Activated B cell treated with CpG ODN at 0.5 μM for 24 hours (primary cell): ENCODE measurements at regions of chr1 and their contacts with region 1.

Region 1: DNA sequence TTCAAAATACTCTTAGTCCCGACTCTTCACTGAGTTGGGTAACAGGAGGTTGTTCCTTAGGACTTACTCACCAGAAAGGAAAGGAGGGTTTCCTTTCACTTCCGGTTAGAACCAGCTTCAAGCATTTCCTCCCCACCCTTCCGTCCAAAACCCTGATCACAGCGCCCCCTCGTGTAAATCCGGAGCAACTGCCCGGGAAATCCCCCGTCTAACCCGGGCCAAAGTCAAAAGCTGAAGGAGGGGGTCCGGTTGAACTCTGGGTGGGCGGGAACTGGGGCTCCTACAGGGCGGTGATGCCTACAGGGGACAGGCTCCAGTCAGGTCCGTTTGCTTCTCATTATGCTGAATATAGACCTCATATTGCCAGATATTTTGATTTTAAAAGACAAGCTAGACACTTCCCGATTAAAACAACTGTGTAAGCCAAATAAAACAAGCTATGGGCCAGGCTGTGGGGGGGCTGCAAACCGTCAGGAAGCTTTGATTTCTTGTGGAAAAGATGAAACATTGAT is 15.0 kb upstream of the MTARC2 start:
- DNase-seq: peak; percentile 67
- ATAC-seq: peak; percentile 95
- H3K4me3 Mint-ChIP-seq: peak overlapping the region; percentile 47
- H3K27ac Mint-ChIP-seq: peak overlapping the region; percentile 30
- H3K4me1 Mint-ChIP-seq: peaks cover 25% of the 10 kb centered on the region
- H3K27me3 Mint-ChIP-seq: no peaks in the 10 kb centered on the region
- CTCF ChIP-seq: peak; percentile 51

Region 2: DNA sequence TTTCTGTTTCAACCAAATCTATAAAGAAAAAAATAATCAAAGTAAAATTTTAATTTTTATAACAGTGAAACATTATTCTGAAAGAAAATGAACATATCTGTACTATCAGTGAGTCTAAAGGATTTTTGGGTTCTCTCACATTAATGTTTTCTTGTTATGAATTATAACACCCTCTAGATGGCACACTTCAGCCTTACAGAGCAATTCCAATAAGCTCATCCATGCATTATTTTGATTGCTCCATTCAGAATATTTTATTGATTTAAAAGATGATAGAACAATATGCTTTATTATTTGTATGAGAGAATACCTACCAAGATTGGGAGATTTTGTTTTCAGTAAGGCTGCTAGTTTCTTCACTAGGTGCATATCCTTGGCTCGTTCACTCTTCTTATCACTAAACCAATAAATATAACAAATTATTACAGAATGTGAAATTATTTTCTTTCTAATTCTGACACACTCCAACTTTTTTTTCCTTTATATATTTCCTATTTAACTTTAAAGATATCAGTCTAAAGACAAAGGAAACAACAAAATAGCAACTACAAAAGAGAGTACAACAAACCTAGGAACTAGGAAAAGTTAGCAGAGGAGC is 543.3 kb before region 1 on chr1:
- CTCF ChIA-PET with region 1: interaction called, 14 read pairs
- POLR2A ChIA-PET with region 1: interaction called, 3 read pairs
- intact Hi-C with region 1: no loop called
- DNase-seq: no peak
- ATAC-seq: no peak
- H3K4me3 Mint-ChIP-seq: no peak overlapping the region
- H3K27ac Mint-ChIP-seq: no peak overlapping the region
- H3K4me1 Mint-ChIP-seq: no peaks in the 10 kb centered on the region
- H3K27me3 Mint-ChIP-seq: no peaks in the 10 kb centered on the region
- CTCF ChIP-seq: no peak

Region 3: GRCh38 chr1:220294846-220295301 is 438.3 kb before region 1 on chr1:
- CTCF ChIA-PET with region 1: interaction called, 21 read pairs
- POLR2A ChIA-PET with region 1: no interaction called
- intact Hi-C with region 1: loop called (anchors 5 kb)
- DNase-seq: no peak
- ATAC-seq: no peak
- H3K4me3 Mint-ChIP-seq: no peak overlapping the region
- H3K27ac Mint-ChIP-seq: no peak overlapping the region
- H3K4me1 Mint-ChIP-seq: no peaks in the 10 kb centered on the region
- H3K27me3 Mint-ChIP-seq: peaks cover 13% of the 10 kb centered on the region
- CTCF ChIP-seq: no peak

Region 4: GRCh38 chr1:220544901-220545303 is 188.2 kb before region 1 on chr1:
- CTCF ChIA-PET with region 1: no interaction called
- POLR2A ChIA-PET with region 1: no interaction called
- intact Hi-C with region 1: no loop called
- DNase-seq: no peak
- ATAC-seq: no peak
- H3K4me3 Mint-ChIP-seq: no peak overlapping the region
- H3K27ac Mint-ChIP-seq: no peak overlapping the region
- H3K4me1 Mint-ChIP-seq: no peaks in the 10 kb centered on the region
- H3K27me3 Mint-ChIP-seq: peaks cover 10% of the 10 kb centered on the region
- CTCF ChIP-seq: no peak

Region 5: GRCh38 chr1:220690140-220691025 is 42.8 kb before region 1 on chr1 and contains the start of gene C1orf115:
- CTCF ChIA-PET with region 1: interaction called, 39 read pairs
- POLR2A ChIA-PET with region 1: interaction called, 11 read pairs
- intact Hi-C with region 1: loop called (anchors 1 kb)
- DNase-seq: peak; percentile 86
- ATAC-seq: peak; percentile 98
- H3K4me3 Mint-ChIP-seq: peak within 1 kb of the TSS; percentile 92
- H3K27ac Mint-ChIP-seq: peak within 1 kb of the TSS; percentile 68
- H3K4me1 Mint-ChIP-seq: peaks cover 26% of the 10 kb centered on the region
- H3K27me3 Mint-ChIP-seq: peaks cover 5% of the 10 kb centered on the region
- CTCF ChIP-seq: peak; percentile 90
- total RNA-seq, gene C1orf115: 19.6 and 20.0 TPM in 2 replicates

Region 6: DNA sequence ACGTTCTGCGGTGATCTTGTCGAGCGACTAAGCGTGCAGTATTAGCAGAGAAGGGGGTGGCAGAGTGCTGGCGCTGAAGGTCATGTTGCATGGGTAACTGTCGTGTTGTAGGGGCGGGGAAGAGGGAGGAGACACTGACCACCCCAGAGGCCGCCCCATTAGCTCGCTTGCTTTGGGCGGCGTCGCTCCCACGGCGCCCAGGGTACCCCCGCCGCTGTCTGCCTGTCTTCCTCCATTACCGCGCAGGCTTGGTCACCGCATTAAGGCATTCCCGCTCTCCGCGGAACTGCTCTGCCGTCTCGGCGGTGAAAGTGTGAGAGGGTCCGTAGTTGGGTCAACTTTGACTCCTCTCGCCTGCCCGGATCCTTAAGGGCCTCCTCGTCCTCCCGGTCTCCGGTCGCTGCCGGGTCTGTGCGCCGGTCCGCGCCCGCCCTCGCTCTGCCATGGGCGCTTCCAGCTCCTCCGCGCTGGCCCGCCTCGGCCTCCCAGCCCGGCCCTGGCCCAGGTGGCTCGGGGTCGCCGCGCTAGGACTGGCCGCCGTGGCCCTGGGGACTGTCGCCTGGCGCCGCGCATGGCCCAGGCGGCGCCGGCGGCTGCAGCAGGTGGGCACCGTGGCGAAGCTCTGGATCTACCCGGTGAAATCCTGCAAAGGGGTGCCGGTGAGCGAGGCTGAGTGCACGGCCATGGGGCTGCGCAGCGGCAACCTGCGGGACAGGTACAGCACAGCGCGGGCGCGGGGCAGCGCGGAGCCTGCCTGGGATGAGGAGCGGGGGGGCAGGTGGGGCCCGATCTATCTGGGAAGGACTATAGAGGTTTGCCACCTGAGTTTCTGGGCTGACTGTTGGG is 15.2 kb after region 1 on chr1 and contains the start of gene MTARC2:
- CTCF ChIA-PET with region 1: interaction called, 13 read pairs
- POLR2A ChIA-PET with region 1: interaction called, 3 read pairs
- intact Hi-C with region 1: no loop called
- DNase-seq: peak; percentile 32
- ATAC-seq: peak; percentile 90
- H3K4me3 Mint-ChIP-seq: peak within 1 kb of the TSS; percentile 85
- H3K27ac Mint-ChIP-seq: no peak within 1 kb of the TSS
- H3K4me1 Mint-ChIP-seq: peaks cover 24% of the 10 kb centered on the region
- H3K27me3 Mint-ChIP-seq: peaks cover 39% of the 10 kb centered on the region
- CTCF ChIP-seq: no peak
- total RNA-seq, gene MTARC2: 8.9 and 9.2 TPM in 2 replicates

Region 7: DNA sequence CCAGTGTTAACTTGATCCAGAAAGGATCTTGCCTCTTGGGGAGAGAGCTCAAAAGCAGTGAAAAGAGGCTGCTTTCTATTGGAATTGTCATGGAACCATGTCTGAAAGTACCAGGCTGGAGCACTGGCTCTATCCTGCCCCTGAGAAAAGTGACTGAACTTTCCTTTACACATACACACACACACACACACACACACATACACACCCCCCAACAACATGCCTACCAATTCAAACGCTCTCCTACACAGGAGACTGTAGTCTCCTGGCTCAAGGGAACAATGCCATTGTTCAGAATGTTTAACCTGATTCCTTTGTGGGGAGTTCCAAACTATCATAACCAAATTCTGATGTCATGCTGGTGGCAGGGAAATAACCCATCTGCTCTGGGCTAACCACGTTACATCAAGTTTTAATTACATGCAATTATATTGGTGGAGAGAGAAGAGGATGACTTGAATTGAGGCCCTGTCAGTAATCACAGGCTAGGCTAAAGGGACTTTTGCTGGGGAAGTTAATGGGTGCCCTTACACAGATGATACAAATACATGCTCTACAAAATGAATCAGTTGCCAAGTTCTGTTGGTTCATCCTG is 1061.0 kb after region 1 on chr1:
- CTCF ChIA-PET with region 1: no interaction called
- POLR2A ChIA-PET with region 1: no interaction called
- intact Hi-C with region 1: no loop called
- DNase-seq: no peak
- ATAC-seq: peak; percentile 80
- H3K4me3 Mint-ChIP-seq: peak overlapping the region; percentile 83
- H3K27ac Mint-ChIP-seq: peak overlapping the region; percentile 97
- H3K4me1 Mint-ChIP-seq: peaks cover 55% of the 10 kb centered on the region
- H3K27me3 Mint-ChIP-seq: no peaks in the 10 kb centered on the region
- CTCF ChIP-seq: no peak